A549 (cell line): ENCODE measurements at regions of chr7 and their contacts with region 1.

Region 1: GRCh38 chr7:8089036-8089780 is 120.6 kb downstream of the GLCCI1 start:
- DNase-seq: no peak
- ATAC-seq: no peak
- H3K4me3 ChIP-seq: no peak overlapping the region
- H3K27ac ChIP-seq: no peak overlapping the region
- H3K4me1 ChIP-seq: no peaks in the 10 kb centered on the region
- CTCF ChIP-seq: no peak
- EP300 ChIP-seq: no peak
- POLR2A ChIP-seq: no peak
- RAD21 ChIP-seq: no peak

Region 2: GRCh38 chr7:8035647-8036518 is 53.3 kb before region 1 on chr7:
- CTCF ChIA-PET with region 1: no interaction called
- POLR2A ChIA-PET with region 1: no interaction called
- DNase-seq: peak in 1 of 2 experiments; percentile 35
- ATAC-seq: peak; percentile 82 to 87
- H3K4me3 ChIP-seq: no peak overlapping the region
- H3K27ac ChIP-seq: no peak overlapping the region
- H3K4me1 ChIP-seq: no peaks in the 10 kb centered on the region
- CTCF ChIP-seq: peak; percentile 37
- EP300 ChIP-seq: no peak
- POLR2A ChIP-seq: no peak
- RAD21 ChIP-seq: peak; percentile 39 to 66; a peak in 4 of 5 replicates

Region 3: GRCh38 chr7:8070451-8071180 is 18.6 kb before region 1 on chr7:
- CTCF ChIA-PET with region 1: interaction called, 10 read pairs
- POLR2A ChIA-PET with region 1: no interaction called
- DNase-seq: no peak
- ATAC-seq: no peak
- H3K4me3 ChIP-seq: no peak overlapping the region
- H3K27ac ChIP-seq: no peak overlapping the region
- H3K4me1 ChIP-seq: no peaks in the 10 kb centered on the region
- CTCF ChIP-seq: no peak
- EP300 ChIP-seq: no peak
- POLR2A ChIP-seq: no peak
- RAD21 ChIP-seq: no peak

Region 4: GRCh38 chr7:8109196-8110022 is 20.2 kb after region 1 on chr7:
- CTCF ChIA-PET with region 1: no interaction called
- POLR2A ChIA-PET with region 1: no interaction called
- DNase-seq: no peak
- ATAC-seq: no peak
- H3K4me3 ChIP-seq: no peak overlapping the region
- H3K27ac ChIP-seq: no peak overlapping the region
- H3K4me1 ChIP-seq: no peaks in the 10 kb centered on the region
- CTCF ChIP-seq: no peak
- EP300 ChIP-seq: no peak
- POLR2A ChIP-seq: no peak
- RAD21 ChIP-seq: no peak

Region 5: DNA sequence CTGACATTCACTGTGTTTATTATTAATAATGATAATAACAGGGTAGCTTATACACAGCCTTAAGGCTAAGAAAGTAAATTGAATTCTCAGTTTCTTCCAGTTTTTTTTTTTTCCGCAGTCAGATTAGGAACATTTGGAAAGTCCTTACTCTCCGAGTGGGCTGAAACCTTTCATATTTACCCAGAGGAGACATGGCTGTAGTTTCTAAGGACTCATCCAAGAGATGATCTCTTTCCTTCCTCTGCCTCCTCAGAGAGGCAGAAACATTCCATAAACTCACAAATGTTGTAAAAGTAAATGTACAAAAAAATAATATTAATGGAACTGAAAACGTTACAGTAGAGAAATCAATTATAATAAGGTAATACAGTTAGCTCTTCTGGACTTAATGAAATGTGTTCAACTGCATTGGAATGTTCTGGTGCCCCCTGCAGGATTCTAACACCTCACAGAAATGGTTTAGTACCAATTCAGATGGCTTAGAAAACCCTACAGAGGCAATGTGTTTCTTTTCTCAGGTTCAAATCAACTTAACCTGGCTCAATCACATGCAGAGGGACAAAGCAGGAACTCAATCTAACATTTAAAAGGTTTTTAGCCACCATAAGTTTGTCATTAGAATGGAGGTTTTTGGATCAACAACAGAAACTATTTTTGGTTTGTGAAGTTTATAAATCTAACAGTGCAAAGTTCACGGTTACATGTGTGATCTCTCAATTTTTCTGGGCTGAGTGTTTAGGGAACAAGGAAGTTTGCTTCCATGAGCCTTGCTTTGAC is 101.1 kb after region 1 on chr7:
- CTCF ChIA-PET with region 1: no interaction called
- POLR2A ChIA-PET with region 1: no interaction called
- DNase-seq: peak in 1 of 2 experiments; percentile 43
- ATAC-seq: peak; percentile 71 to 80
- H3K4me3 ChIP-seq: no peak overlapping the region
- H3K27ac ChIP-seq: no peak overlapping the region
- H3K4me1 ChIP-seq: no peaks in the 10 kb centered on the region
- CTCF ChIP-seq: peak; percentile 76
- EP300 ChIP-seq: no peak
- POLR2A ChIP-seq: no peak
- RAD21 ChIP-seq: peak; percentile 70 to 74